GM10248 (cell line): ENCODE measurements at regions of chr12 and their contacts with region 1.

Region 1: DNA sequence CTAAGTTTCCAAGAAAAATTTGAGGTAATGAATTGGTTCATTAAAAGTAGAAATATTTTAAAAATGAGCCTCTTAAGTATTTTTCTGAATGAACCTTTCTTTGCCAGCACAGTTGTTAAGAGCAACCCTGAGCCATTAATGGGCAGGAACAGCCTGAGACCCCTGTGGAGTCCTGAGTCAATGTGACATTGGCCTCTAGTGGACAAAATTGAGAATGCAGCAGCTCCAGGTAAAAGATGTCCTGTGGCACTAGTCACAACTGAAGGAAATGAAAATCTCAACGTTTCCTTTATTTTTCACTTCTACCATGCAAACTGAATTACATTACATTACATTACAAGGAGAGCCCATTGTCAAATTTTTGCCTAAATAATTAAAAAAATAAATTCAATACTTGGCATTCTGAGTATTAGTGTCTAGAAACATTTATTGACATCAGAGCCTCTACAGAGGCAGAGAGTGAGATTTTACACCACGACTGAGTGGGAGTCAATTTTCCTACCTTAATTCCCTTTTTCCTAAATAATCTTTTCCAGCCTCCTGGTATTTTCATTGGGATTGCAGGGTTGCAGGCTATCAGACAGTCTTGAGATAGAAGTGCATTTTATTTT is 135.7 kb downstream of the PPM1H start:
- DNase-seq: peak; percentile 71
- CTCF ChIP-seq: peak; percentile 85

Region 2: DNA sequence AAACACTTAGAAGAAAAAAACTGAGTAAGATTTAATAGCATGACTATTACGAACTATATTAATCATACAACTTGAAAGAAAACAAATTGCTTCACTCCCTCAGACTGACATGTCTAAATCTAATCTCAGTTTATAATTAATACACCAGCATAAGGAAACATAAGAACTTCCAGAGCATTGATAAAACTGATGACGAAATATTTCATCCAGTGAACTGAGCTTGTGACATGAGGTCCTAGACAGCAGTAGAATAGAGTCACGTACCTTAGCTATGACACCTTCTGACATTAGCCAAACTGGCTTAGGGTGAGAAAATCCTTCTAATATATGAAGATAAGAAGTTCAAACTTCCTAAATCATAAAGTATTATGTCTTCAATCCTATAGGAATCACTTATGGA is 617.8 kb before region 1 on chr12:
- CTCF ChIA-PET with region 1: no interaction called
- POLR2A ChIA-PET with region 1: no interaction called
- DNase-seq: no peak
- CTCF ChIP-seq: no peak

Region 3: GRCh38 chr12:62581288-62582064 is 217.8 kb before region 1 on chr12:
- CTCF ChIA-PET with region 1: interaction called, 157 read pairs
- POLR2A ChIA-PET with region 1: no interaction called
- DNase-seq: peak; percentile 48
- CTCF ChIP-seq: peak; percentile 55

Region 4: DNA sequence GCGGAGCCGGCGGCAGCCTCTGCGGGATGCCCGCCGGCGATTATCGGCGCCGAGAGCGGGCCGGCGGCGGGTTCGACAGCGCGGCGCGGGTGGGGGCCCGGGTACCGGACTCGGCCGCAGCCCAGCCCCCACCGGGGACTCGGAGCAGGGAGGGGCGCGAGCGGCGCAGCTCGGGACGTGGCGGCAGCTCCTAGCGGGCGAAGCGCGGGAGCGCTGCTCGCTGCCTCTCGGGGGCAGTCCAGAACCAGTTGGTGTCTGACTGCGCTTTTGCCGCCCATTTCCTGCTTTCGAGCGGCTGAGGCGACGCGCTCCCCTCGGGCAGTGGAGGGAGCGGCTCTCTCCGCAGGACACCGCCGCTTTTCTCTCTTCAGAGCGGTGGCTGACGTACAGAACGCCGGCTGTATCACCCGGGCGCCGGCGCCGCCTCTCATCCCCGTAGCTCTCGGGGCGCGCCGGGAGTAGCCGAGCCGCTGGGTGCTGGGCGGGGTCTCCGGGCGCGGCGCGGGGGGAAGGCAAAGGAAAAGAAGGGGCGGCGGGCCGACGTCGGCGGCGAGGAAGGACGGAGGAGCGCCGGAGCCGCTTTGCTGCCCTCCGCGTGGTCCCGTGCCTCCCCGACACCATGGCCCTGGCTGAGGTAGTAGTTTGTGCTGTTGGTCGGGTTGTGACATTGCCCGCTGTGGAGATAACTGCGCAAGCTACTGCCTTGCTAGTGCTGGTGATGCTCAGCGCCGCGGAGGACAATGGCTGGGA is 196.0 kb before region 1 on chr12:
- CTCF ChIA-PET with region 1: interaction called, 10 read pairs
- POLR2A ChIA-PET with region 1: no interaction called
- DNase-seq: peak; percentile 82
- CTCF ChIP-seq: peak; percentile 48

Region 5: GRCh38 chr12:62769076-62769619 is 30.1 kb before region 1 on chr12:
- CTCF ChIA-PET with region 1: interaction called, 16 read pairs
- POLR2A ChIA-PET with region 1: no interaction called
- DNase-seq: no peak
- CTCF ChIP-seq: no peak

Region 6: GRCh38 chr12:62785941-62786559 is 13.2 kb before region 1 on chr12:
- CTCF ChIA-PET with region 1: interaction called, 146 read pairs
- POLR2A ChIA-PET with region 1: no interaction called
- DNase-seq: no peak
- CTCF ChIP-seq: no peak

Region 7: GRCh38 chr12:62813031-62813829 is 14.0 kb after region 1 on chr12:
- CTCF ChIA-PET with region 1: interaction called, 126 read pairs
- POLR2A ChIA-PET with region 1: no interaction called
- DNase-seq: peak; percentile 53
- CTCF ChIP-seq: peak; percentile 78